Psoas muscle (tissue), 8 donors: ENCODE measurements at regions of chr12 and their contacts with region 1.

Region 1: DNA sequence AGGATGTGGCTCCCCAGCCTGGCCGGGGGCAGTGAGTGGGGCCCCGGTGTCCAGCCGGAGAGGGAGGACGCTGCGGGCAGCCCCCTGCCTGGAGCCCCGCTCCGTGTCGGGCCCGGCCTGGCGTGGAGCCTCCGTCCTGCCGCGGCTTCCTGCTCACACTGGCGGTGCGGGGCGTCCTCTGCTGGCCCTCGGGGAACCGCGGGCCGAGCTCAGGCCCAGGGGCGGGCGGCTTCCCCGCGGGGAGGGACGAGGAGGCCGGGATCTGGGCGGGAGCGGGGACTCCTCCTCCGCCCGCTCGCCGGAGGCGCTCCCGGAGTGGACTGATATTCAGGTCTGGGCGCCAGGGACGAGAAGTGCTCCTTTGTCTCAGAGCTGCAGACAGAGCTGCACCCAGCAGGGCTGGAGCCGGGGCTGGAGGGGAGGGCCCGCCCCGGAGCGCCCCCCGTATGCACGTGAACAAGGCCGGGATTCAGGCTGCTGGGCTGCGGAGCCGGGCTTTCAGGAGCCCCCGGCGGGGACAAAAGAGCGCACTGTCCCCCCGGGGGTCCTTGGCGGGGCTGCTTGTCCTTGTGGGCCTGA is 2.2 kb downstream of the MMP17 start:
- DNase-seq: peak; percentile 87 to 90
- ATAC-seq: peak; percentile 77 to 89 (median 81)
- H3K4me3 ChIP-seq: peak overlapping the region; percentile 64
- H3K27ac ChIP-seq: no peak overlapping the region
- H3K4me1 ChIP-seq: peaks cover 5% of the 10 kb centered on the region
- H3K27me3 ChIP-seq: peaks cover 0 to 77% (median 15%) of the 10 kb centered on the region in 3 donors
- CTCF ChIP-seq: peak; percentile 56

Region 2: GRCh38 chr12:130916251-130916911 is 914.0 kb before region 1 on chr12:
- intact Hi-C with region 1: loop called in 1 of 2 experiments (anchors 10 kb)
- DNase-seq: peak; percentile 28 to 71
- ATAC-seq: peak; percentile 66 to 86 (median 80)
- H3K4me3 ChIP-seq: peak overlapping the region; percentile 30
- H3K27ac ChIP-seq: no peak overlapping the region
- H3K4me1 ChIP-seq: no peaks in the 10 kb centered on the region
- H3K27me3 ChIP-seq: peaks cover 0 to 19% (median 4%) of the 10 kb centered on the region in 3 donors
- CTCF ChIP-seq: peak; percentile 82

Region 3: GRCh38 chr12:131104463-131105350 is 725.7 kb before region 1 on chr12:
- intact Hi-C with region 1: loop called (anchors 2 to 10 kb)
- DNase-seq: peak; percentile 82 to 91
- ATAC-seq: peak; percentile 83 to 91 (median 87)
- H3K4me3 ChIP-seq: no peak overlapping the region
- H3K27ac ChIP-seq: no peak overlapping the region
- H3K4me1 ChIP-seq: no peaks in the 10 kb centered on the region
- H3K27me3 ChIP-seq: no peaks in the 10 kb centered on the region
- CTCF ChIP-seq: peak; percentile 85